PC-9 (cell line): ENCODE measurements at regions of chr3 and their contacts with region 1.

Region 1: DNA sequence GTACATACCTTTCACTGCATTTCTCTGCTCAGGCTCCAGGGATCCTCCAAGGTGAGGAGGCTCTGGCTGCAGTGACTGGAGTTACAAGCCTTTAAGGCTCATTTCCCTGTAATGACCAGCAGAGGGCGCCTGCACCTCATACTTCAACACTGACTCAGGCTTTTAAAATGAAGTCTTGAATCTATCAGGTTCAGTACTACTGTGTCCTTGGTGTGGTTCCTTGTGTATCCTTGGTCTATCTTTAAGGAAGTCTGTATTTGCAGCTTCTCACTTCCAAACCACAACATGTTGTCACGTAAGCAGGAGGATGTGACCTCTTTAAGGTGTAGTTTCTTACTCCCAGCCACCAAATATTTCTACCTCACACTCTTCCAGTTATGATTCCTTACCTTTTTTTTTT is 122.5 kb upstream of the ZBED2 start:
- DNase-seq: peak; percentile 84 to 98
- H3K4me3 ChIP-seq: no peak overlapping the region
- H3K27ac ChIP-seq: peak overlapping the region; percentile 34
- H3K4me1 ChIP-seq: peaks cover 25% of the 10 kb centered on the region
- H3K27me3 ChIP-seq: no peaks in the 10 kb centered on the region
- CTCF ChIP-seq: peak; percentile 100

Region 2: DNA sequence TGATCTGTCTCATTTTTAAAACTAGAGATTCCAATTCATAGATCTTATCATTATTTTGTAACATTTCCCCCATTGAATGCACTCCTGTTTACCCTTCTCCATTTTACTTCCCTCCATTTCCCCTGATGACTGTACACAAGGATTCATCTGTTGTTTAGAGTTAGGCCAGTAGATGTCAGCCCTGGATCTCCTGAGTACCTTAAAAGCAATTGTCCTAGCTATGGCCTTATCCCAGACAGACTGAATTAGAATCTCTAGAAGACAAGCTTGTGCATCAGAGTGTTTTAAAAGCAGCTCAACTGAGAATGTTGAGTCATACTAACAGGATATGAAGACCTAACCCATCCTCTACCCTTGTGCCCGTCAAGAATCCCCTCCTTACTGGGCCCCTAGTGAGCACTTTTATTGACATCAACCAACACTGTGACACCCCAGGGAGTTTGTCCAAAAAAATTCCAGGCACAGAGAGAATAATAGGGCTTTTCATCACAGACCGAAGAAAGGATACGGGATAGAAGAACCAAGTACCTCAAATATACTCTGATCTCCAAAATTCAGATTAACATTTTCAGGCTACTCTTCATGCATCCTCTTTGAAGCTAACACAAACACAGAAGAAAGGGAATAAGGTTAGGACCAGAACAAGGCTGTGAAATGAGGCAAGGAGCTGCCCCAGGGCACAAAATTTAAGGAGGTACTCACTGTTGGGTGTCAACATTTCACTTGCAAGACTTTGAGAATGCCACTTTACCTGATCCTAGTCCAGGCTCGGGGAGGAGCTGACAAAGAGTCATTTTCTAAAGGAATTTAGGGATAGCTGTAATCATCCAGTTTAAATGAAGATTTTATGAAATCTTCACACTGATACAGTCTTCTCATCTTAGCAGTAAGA is 139.6 kb before region 1 on chr3:
- CTCF ChIA-PET with region 1: interaction called, 23 read pairs
- POLR2A ChIA-PET with region 1: no interaction called
- intact Hi-C with region 1: loop called (anchors 1 kb)
- DNase-seq: peak; percentile 40 to 79
- H3K4me3 ChIP-seq: no peak overlapping the region
- H3K27ac ChIP-seq: no peak overlapping the region
- H3K4me1 ChIP-seq: peaks cover 12% of the 10 kb centered on the region
- H3K27me3 ChIP-seq: no peaks in the 10 kb centered on the region
- CTCF ChIP-seq: peak; percentile 80

Region 3: GRCh38 chr3:111761309-111761831 is 43.8 kb after region 1 on chr3:
- CTCF ChIA-PET with region 1: no interaction called
- POLR2A ChIA-PET with region 1: no interaction called
- intact Hi-C with region 1: loop called (anchors 1 kb)
- DNase-seq: peak; percentile 47 to 73
- H3K4me3 ChIP-seq: no peak overlapping the region
- H3K27ac ChIP-seq: peak overlapping the region; percentile 32
- H3K4me1 ChIP-seq: peaks cover 10% of the 10 kb centered on the region
- H3K27me3 ChIP-seq: no peaks in the 10 kb centered on the region
- CTCF ChIP-seq: no peak

Region 4: GRCh38 chr3:111924283-111924682 is 206.7 kb after region 1 on chr3:
- CTCF ChIA-PET with region 1: no interaction called
- POLR2A ChIA-PET with region 1: no interaction called
- intact Hi-C with region 1: loop called (anchors 1 kb)
- DNase-seq: peak in 1 of 2 experiments; percentile 60
- H3K4me3 ChIP-seq: 0 out of 2 replicates have a peak overlapping the region, but pooled peaks have one; percentile 1
- H3K27ac ChIP-seq: peak overlapping the region; percentile 96
- H3K4me1 ChIP-seq: peaks cover 52% of the 10 kb centered on the region
- H3K27me3 ChIP-seq: no peaks in the 10 kb centered on the region
- CTCF ChIP-seq: no peak

Region 5: GRCh38 chr3:112043603-112044201 is 326.1 kb after region 1 on chr3:
- CTCF ChIA-PET with region 1: interaction called, 4 read pairs
- POLR2A ChIA-PET with region 1: interaction called, 5 read pairs
- intact Hi-C with region 1: loop called (anchors 1 kb)
- DNase-seq: peak; percentile 46 to 68
- H3K4me3 ChIP-seq: peak overlapping the region; percentile 3; the same call in 1 of the 2 replicates
- H3K27ac ChIP-seq: no peak overlapping the region
- H3K4me1 ChIP-seq: no peaks in the 10 kb centered on the region
- H3K27me3 ChIP-seq: no peaks in the 10 kb centered on the region
- CTCF ChIP-seq: peak; percentile 100